KBM-7 (cell line): ENCODE measurements at regions of chr11 and their contacts with region 1.

Region 1: DNA sequence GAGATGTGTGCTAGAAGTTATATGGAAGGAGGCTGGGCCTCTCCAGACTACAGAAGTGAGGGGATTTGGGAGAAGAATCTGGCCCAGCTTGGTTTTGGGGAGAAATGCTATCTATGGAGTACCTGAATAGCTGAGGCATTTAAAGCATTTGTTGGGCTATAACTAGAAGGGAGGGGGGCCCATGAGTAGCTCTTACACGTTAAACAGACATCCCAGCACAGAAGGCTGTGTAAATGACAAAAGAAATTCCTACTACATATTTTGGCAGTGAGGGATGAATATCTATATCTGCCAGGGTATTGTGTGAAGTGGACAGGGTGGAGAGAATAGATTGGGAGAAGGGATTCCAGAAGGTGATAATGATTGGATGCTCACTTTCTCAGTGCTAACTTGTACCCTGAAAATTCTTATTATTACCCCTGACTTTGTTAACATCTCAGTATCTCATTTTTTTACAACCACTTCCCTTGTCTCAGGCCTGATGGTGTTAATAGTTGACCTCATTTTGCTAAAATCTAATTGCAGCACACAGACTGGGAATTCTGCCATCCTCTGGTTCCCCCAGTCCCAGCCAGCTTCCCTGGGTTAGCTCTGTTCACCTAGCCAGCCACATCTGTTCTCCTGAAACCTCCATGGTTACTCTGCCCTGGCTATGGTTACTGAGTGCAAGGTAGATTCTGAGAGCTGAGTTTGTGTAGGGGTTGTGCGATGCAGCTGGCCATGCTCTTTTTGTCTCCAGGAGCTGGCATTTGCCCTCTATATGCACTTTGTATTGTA is 28.8 kb upstream of the RRM1 start:
- DNase-seq: no peak

Region 2: GRCh38 chr11:3854977-3855807 is 210.6 kb before region 1 on chr11 and contains the start of gene STIM1:
- in situ Hi-C with region 1: loop called (anchors 10 kb)
- DNase-seq: peak; percentile 98